ENCODE measurements at regions of chr7 and their contacts with region 1.

Region 1: DNA sequence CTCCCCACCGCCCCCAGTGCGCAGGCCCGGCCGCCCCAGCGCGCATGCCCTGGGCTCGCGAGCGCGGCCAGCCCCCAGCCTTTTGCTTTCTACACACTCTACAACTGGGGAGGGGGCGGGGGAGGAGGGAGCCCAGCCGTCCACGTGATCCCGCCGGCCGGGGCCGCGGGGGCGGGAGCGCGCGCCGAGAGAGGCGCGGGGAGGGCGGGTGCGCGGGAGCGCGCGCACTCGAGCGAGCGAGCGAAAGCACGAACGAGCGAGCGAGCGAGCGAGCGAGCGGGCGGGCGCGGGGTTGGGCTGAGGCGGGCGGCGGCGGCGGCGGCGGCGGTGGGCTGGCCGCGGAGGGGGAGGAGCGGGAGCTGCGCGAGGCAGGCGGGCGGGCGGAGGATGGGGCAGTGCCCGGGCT is at the start of gene AUTS2:
- DNase-seq: peak; percentile 92
- ATAC-seq: peak; percentile 89
- total RNA-seq, gene AUTS2: 5.3 TPM

Region 2: GRCh38 chr7:69651101-69651590 is 53.1 kb after region 1 on chr7:
- intact Hi-C with region 1: loop called (anchors 5 kb)
- DNase-seq: no peak
- ATAC-seq: peak; percentile 56

Region 3: DNA sequence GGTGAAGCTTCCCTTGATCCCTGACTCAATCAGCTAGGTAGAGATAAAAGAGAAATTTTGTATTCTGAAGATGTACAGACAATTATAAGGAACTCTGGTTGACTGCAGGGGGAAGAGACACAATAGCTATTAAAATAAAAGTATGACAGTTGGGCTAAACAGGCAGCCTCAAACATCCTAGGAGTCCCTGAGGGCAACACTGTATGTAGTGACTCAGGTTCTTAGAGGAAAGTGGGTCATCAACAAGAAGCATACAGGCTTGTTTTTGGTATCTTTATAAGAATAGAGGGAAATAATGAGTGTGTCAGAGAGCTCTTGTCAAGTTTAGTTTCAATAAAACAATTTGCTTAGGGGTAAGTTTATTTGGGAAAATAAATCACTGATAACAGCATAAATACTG is 150.4 kb after region 1 on chr7:
- intact Hi-C with region 1: no loop called
- DNase-seq: no peak
- ATAC-seq: no peak

Region 4: DNA sequence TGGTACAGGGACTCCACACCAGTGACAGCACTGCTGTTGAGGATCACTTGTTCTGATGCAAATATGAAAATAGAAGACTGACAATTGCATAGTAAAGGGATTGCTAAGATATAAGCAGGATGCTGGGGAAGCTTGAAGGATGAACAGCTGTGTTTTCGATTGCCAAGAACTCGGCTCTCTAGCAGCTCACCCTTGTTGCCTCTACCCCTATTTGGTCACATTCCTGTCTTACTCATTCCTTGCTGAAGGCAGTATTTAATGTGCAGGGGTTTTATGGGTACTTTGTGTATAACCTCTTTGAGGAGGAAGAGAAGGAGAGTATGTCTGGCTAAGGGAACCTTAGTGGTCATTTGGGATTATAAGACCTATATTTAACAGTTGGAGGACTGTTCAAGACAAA is 219.0 kb after region 1 on chr7:
- intact Hi-C with region 1: loop called (anchors 5 kb)
- DNase-seq: no peak
- ATAC-seq: no peak

Region 5: GRCh38 chr7:69889338-69889975 is 291.4 kb after region 1 on chr7:
- intact Hi-C with region 1: loop called (anchors 10 kb)
- DNase-seq: no peak
- ATAC-seq: no peak

Measured in Right ventricle myocardium inferior (tissue), 1 donor.